Naive thymus-derived CD4-positive, alpha-beta T cell (primary cell): ENCODE measurements at regions of chr5 and their contacts with region 1.

Region 1: DNA sequence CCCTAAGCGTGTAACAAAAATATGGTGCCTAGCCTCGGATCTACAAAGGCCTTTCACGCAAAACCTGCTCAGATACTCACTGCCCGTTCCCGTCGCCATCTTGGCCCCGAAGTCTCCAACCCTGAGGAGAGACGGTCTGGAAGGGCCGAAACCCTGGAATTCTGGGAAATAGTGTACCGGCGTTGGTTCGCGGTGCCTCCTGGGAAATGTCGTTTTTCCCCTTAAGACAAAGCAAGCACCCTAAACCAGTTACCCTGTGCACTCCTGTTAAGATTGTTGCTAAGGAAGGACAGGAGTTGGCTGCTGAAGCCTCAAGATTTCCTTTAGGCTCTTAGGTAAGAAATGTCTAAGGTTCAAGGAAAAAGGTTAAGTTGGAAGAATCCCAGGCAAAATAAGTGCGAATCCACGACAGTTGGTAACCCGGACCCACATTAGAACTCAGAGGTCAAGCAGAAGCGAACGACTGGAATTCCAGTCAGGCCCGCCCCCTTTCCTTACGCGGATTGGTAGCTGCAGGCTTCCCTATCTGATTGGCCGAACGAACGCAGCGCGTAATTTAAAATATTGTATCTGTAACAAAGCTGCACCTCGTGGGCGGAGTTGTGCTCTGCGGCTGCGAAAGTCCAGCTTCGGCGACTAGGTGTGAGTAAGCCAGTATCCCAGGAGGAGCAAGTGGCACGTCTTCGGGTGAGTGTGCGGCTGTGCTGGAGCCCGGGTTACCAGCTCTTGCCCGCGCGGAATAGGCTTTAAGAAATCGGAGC is at the starts of genes BRD8 and KIF20A:
- DNase-seq: peak; percentile 62 to 89 (median 84)
- ATAC-seq: peak; percentile 92
- H3K4me3 ChIP-seq: peak within 1 kb of the TSS; percentile 85
- H3K4me3 Mint-ChIP-seq: peak within 1 kb of the TSS in 2 of 10 donors; percentile 23 to 51
- H3K27ac ChIP-seq: peak within 1 kb of the TSS; percentile 74
- H3K27ac Mint-ChIP-seq: peak within 1 kb of the TSS in 2 of 9 donors; percentile 38 to 60
- H3K4me1 ChIP-seq: peaks cover 10 to 15% of the 10 kb centered on the region in 2 donors
- H3K4me1 Mint-ChIP-seq: peaks cover 0 to 45% (median 17%) of the 10 kb centered on the region in 7 donors
- H3K27me3 ChIP-seq: no peaks in the 10 kb centered on the region
- H3K27me3 Mint-ChIP-seq: no peaks in the 10 kb centered on the region
- total RNA-seq, gene BRD8: 24.7 to 81.9 (median 66.1) TPM
- total RNA-seq, gene KIF20A: 0.29 to 34.1 TPM in 2 of 5 experiments, not detected in the others

Region 2: GRCh38 chr5:137800700-137801411 is 377.8 kb before region 1 on chr5:
- CTCF ChIA-PET with region 1: no interaction called
- POLR2A ChIA-PET with region 1: no interaction called
- intact Hi-C with region 1: no loop called
- DNase-seq: no peak
- ATAC-seq: no peak
- H3K4me3 ChIP-seq: no peak overlapping the region
- H3K4me3 Mint-ChIP-seq: no peak overlapping the region
- H3K27ac ChIP-seq: no peak overlapping the region
- H3K27ac Mint-ChIP-seq: no peak overlapping the region
- H3K4me1 ChIP-seq: no peaks in the 10 kb centered on the region
- H3K4me1 Mint-ChIP-seq: no peaks in the 10 kb centered on the region
- H3K27me3 ChIP-seq: no peaks in the 10 kb centered on the region
- H3K27me3 Mint-ChIP-seq: peaks cover 0 to 24% (median 0%) of the 10 kb centered on the region in 5 donors

Region 3: DNA sequence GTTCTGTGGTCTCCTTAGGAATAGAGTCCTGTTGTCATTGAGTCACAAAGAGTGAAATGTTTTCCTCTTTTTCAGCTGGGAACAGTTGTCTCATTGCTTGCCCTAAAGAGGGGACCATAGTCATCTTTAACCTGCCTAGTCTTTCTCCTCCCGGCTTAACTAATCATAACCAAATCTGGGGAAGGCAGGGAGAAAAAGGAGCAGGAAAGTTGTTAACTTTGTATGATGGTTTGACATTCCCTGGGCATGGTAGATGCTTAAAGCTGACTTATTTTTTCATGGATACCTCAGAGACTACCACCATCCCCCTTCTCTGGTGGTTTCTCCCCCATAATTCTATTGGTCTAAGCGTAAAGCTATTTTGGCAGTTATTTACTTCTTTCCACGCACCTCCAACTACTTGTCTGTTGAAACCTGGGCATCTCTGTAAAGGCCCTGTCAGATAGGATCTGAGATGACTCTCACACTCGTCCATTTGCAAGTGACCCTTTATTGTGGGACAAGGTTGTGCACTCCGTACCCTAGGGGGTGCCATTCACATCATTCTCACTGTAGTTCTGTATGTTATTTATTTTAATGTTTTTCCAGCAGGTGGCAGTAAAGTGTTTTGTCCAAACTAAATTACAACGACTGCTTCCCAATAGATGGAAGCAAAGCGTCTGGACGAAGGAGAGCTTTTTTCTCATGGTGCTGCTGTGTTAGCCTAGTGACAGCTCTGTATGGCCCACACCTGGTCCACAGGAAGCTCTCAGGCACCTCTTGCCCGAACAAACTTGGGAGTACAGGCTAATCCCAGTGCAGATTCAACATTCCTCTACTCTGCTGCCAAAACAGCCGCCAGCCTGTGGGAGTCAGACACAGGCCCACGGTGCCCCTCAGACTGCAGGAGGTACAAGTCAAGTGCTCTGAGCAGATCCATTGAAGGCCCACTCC is 142.8 kb before region 1 on chr5:
- CTCF ChIA-PET with region 1: no interaction called
- POLR2A ChIA-PET with region 1: no interaction called
- intact Hi-C with region 1: loop called (anchors 1 to 2 kb)
- DNase-seq: peak; percentile 11 to 80 (median 72)
- ATAC-seq: peak; percentile 76
- H3K4me3 ChIP-seq: no peak overlapping the region
- H3K4me3 Mint-ChIP-seq: peak overlapping the region in 9 of 10 donors; percentile 0 to 78 (median 25)
- H3K27ac ChIP-seq: no peak overlapping the region
- H3K27ac Mint-ChIP-seq: peak overlapping the region in 8 of 9 donors; percentile 4 to 89 (median 37)
- H3K4me1 ChIP-seq: peaks cover 4 to 24% of the 10 kb centered on the region in 2 donors
- H3K4me1 Mint-ChIP-seq: peaks cover 15 to 30% (median 24%) of the 10 kb centered on the region in 7 donors
- H3K27me3 ChIP-seq: no peaks in the 10 kb centered on the region
- H3K27me3 Mint-ChIP-seq: no peaks in the 10 kb centered on the region

Region 4: DNA sequence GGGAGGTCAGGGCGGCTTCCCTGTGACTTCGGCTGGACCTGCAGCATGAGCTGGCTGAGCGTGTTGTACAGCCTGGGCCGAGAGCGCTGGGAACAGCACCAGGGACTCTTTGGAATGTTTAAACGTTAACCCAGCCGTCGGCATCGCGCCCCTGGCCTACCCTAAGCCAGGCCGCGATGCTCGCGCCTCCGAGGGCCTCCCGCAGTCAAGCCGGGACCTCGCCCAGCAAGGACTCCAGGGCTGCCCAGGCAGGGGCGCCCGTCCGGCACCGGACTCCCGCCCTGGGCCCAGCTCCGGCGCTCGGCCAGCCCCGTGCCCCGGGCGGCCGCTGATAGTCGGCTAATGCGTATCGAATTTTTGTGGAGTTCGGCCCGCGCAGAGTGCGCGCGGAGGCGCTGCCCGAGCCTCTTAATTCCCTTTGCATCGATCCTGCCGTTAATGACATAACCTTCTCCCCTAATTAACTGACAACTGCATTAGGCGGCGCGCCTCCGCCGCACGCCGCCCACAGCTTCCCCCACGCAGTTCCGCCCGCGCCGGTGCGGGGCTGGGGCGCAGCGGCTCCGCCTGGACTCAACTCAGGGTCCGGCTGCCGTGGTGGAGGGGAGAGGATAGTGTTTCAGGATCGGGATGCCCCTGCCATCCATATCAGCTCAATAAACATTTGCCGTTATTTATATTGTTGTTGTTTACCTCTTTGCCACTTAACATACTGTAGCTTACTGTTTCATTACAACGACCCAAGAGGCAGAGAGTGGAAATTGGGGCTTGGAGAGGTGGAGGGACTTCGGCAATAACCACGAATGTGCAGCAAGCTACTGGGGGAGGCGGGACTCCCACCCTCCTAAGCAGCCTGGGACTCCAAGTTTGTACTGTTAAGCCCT is 63.2 kb after region 1 on chr5:
- CTCF ChIA-PET with region 1: no interaction called
- POLR2A ChIA-PET with region 1: no interaction called
- intact Hi-C with region 1: no loop called
- DNase-seq: peak in 5 of 9 donors; percentile 3 to 14 (median 8)
- ATAC-seq: peak; percentile 79
- H3K4me3 ChIP-seq: no peak overlapping the region
- H3K4me3 Mint-ChIP-seq: peak overlapping the region; percentile 45 to 84 (median 70)
- H3K27ac ChIP-seq: no peak overlapping the region
- H3K27ac Mint-ChIP-seq: no peak overlapping the region
- H3K4me1 ChIP-seq: no peaks in the 10 kb centered on the region
- H3K4me1 Mint-ChIP-seq: peaks cover 7 to 19% (median 13%) of the 10 kb centered on the region in 7 donors
- H3K27me3 ChIP-seq: peaks cover 4 to 26% of the 10 kb centered on the region in 2 donors
- H3K27me3 Mint-ChIP-seq: peaks cover 41 to 57% (median 50%) of the 10 kb centered on the region in 5 donors

Region 5: DNA sequence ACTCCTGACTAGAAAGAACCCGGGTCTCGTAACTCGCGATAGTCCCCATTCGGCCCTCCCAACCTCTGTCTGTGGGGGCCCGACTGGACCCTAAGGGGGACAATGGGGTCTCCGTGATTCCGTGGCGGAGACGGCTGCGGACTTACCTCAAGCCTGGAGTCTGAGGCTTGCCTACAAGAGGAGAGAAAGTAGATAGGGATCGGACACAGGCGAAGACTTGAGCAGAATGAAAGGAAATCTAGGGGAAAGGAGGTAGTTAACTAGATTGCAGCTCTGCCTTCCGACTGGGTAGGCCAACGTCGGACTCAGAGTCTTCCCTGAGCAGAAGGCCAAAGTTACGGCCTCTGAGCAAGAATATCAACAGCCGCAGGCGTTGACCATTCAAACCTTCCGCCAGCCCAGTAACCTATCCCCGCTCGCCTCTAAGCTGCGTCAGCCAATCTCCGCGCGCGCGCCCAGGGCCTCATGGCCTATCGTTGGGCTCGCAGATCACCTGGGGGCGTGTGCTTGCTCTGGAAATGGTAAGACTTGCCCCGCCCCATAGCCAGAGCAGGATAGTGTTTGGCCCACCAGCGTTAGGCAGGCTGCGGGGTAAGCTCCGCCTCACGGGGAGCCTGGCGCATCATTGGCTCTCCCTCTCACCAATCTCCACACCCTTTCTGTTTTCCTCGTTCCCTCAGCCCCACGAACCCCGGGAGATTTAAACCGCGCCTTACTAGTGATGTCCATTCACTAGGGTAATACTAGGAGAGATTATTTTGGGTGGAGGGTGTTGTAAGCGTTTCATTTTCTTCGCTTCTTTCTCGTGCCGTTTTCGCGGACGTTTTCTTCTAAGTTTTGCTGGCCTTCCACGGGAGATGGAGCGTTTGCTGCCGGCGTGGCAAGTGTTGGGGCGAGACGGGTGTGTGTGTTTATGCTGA is 153.0 kb after region 1 on chr5 and contains the start of gene CDC25C:
- CTCF ChIA-PET with region 1: no interaction called
- POLR2A ChIA-PET with region 1: no interaction called
- intact Hi-C with region 1: loop called (anchors 1 to 2 kb)
- DNase-seq: peak; percentile 87 to 98 (median 96)
- ATAC-seq: peak; percentile 100
- H3K4me3 ChIP-seq: peak within 1 kb of the TSS; percentile 85
- H3K4me3 Mint-ChIP-seq: peak within 1 kb of the TSS; percentile 83 to 95 (median 86)
- H3K27ac ChIP-seq: peak within 1 kb of the TSS; percentile 49
- H3K27ac Mint-ChIP-seq: peak within 1 kb of the TSS; percentile 48 to 92 (median 68)
- H3K4me1 ChIP-seq: peaks cover 1 to 7% of the 10 kb centered on the region in 2 donors
- H3K4me1 Mint-ChIP-seq: peaks cover 7 to 35% (median 14%) of the 10 kb centered on the region in 7 donors
- H3K27me3 ChIP-seq: no peaks in the 10 kb centered on the region
- H3K27me3 Mint-ChIP-seq: no peaks in the 10 kb centered on the region
- total RNA-seq, gene CDC25C: 9.8 TPM in 1 of 5 experiments, not detected in the others

Region 6: DNA sequence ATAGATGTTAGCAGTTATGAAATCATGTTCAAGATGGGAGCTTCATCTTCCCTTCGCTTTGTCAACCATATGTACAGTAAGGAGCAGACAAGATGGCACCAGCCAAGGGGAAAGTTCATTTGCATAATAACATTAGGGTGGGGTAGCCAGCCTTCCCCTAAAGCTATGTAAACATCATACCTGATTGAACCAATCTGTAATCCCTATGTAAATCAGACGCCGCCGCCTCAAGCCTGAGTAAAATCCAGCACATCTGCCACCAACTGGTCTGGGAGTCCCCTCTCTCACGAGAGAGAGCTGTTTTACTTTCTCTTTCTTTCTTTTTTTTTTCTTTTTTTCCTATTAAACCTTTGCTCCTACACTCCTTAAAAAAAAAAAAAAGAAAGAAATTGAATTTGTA is 229.3 kb after region 1 on chr5:
- CTCF ChIA-PET with region 1: interaction called, 3 read pairs
- POLR2A ChIA-PET with region 1: no interaction called
- intact Hi-C with region 1: loop called in 1 of 2 experiments (anchors 1 kb)
- DNase-seq: no peak
- ATAC-seq: peak; percentile 26
- H3K4me3 ChIP-seq: no peak overlapping the region
- H3K4me3 Mint-ChIP-seq: no peak overlapping the region
- H3K27ac ChIP-seq: no peak overlapping the region
- H3K27ac Mint-ChIP-seq: peak overlapping the region in 4 of 9 donors; percentile 0 to 43 (median 23)
- H3K4me1 ChIP-seq: no peaks in the 10 kb centered on the region
- H3K4me1 Mint-ChIP-seq: peaks cover 0 to 15% (median 0%) of the 10 kb centered on the region in 7 donors
- H3K27me3 ChIP-seq: no peaks in the 10 kb centered on the region
- H3K27me3 Mint-ChIP-seq: no peaks in the 10 kb centered on the region

Region 7: DNA sequence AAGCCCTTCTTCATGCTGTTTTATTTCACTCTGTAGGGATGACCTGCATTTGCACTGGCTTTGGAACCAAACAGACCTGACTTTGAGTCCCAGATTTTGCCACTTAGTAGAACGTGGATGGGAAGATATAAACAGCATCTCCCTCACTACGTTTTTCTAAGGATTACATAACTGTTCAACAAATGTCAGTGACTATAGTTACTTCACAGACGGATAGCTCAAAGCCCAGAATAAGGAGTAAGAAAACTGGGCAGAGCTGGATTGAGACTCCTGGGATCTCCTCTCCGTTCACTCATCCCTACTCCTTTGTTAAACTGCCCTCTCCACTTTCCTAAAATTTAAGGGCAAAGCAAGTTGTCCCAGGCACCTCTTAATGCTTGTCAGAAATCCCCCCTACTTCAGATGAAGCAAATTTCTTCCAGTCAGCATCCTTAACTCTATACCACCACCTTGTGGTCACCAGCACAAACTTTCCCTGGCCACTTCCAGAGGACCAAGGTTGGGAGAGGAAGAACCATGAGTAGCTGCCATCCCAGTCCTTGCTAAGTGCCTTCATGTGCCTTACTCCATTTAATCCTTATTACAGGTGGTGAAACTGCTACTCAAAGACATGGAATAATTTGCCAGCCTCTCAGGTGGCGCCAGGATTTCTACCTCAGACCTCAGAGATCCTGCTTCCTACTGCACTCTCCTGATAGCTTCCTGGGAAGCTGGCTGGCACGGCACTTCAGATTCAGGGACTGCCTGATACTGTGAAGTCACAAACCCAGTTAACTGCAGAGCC is 325.0 kb after region 1 on chr5:
- CTCF ChIA-PET with region 1: no interaction called
- POLR2A ChIA-PET with region 1: no interaction called
- intact Hi-C with region 1: loop called in 1 of 2 experiments (anchors 1 kb)
- DNase-seq: peak in 7 of 9 donors; percentile 30 to 60 (median 49)
- ATAC-seq: peak; percentile 82
- H3K4me3 ChIP-seq: no peak overlapping the region
- H3K4me3 Mint-ChIP-seq: no peak overlapping the region
- H3K27ac ChIP-seq: no peak overlapping the region
- H3K27ac Mint-ChIP-seq: peak overlapping the region in 3 of 9 donors; percentile 9 to 47 (median 32)
- H3K4me1 ChIP-seq: no peaks in the 10 kb centered on the region
- H3K4me1 Mint-ChIP-seq: peaks cover 0 to 5% (median 3%) of the 10 kb centered on the region in 7 donors
- H3K27me3 ChIP-seq: no peaks in the 10 kb centered on the region
- H3K27me3 Mint-ChIP-seq: no peaks in the 10 kb centered on the region

Region 8: GRCh38 chr5:139293504-139294373 is 1115.0 kb after region 1 on chr5 and contains the start of gene MATR3:
- CTCF ChIA-PET with region 1: no interaction called
- POLR2A ChIA-PET with region 1: no interaction called
- intact Hi-C with region 1: loop called in 1 of 2 experiments (anchors 10 kb)
- DNase-seq: peak; percentile 83 to 94 (median 91)
- ATAC-seq: peak; percentile 95
- H3K4me3 ChIP-seq: peak within 1 kb of the TSS; percentile 87
- H3K4me3 Mint-ChIP-seq: peak within 1 kb of the TSS; percentile 91 to 99 (median 98)
- H3K27ac ChIP-seq: peak within 1 kb of the TSS; percentile 98
- H3K27ac Mint-ChIP-seq: peak within 1 kb of the TSS; percentile 96 to 100 (median 99)
- H3K4me1 ChIP-seq: peaks cover 29 to 37% of the 10 kb centered on the region in 2 donors
- H3K4me1 Mint-ChIP-seq: peaks cover 33 to 51% (median 42%) of the 10 kb centered on the region in 7 donors
- H3K27me3 ChIP-seq: no peaks in the 10 kb centered on the region
- H3K27me3 Mint-ChIP-seq: no peaks in the 10 kb centered on the region
- total RNA-seq, gene MATR3: 219 to 333 (median 274) TPM